Sciatic nerve (tissue), 2 donors: ENCODE measurements at regions of chr5 and their contacts with region 1.

Region 1: DNA sequence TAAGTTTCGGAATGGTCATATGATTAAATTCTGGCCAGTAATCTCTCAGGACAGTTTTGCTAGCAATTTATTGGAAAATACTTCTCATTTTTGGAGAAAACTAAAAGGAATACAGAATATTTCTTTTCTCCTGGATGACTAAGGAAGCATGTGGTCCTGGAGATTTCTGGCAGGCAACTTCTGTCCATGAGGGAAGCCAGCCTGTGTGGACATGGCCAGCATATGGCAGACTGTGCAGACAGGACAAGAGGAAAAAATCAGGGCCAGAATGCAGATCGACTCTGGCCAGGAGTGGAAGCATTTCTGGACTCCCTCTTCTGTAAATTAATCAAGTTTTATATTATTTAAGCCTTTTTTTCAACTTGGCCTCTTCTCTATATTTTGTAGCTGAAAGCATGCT is 100.4 kb upstream of the CDH18 start:
- DNase-seq: no peak
- ATAC-seq: no peak

Region 2: GRCh38 chr5:19104948-19105347 is 983.4 kb before region 1 on chr5:
- intact Hi-C with region 1: loop called (anchors 5 kb)
- DNase-seq: no peak
- ATAC-seq: no peak